ENCODE measurements at regions of chr3 and their contacts with region 1.

Region 1: DNA sequence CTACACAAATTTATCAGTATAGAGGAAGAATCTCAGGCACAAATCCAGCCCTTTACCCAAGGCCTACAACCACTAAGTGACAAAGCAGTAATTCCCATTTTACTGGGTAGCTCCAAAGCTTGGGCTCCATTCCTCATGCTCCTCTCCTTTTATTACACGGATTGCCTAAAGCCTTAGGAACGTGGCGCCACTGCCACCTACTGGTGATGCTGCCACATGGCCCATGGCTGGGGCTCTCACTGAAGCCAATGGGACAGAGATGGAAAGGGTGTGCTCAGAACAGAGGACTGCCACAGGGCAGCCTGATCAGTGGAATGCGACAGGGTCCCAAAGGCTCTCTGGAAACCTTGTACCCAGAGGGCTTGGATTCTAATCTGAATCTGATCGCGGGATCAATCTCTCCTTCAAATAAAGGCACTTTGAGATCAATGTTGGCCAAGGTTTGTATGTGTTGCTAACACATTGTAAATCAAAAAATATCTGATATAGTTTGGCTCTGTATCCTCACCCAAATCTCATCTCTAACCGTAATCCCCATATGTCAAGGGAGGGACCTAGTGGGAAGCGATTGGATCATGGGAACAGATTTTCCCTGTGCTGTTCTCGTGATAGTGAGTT is 33.5 kb upstream of the LYZL4 start:
- DNase-seq: peak; percentile 91

Region 2: DNA sequence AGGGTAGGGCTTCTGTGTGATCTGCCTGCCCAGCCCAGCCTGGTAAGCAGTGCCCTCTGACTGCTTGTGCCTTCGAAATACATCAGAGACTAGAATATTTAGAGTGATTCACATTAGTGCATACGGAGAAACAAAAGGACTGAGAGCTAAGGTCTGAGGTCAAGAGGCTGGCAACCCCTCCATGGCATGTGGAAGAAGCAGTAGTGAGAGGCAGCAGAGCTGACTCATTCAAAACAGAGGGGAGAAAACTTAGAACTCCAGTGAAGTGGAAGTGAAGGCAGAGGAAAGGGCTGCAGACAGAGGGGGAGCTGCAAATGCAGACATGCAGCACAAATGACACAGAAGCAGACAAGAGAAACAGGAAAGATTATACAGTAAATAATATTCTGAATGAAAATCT is 543.7 kb before region 1 on chr3:
- intact Hi-C with region 1: loop called (anchors 5 kb)
- DNase-seq: no peak

Region 3: DNA sequence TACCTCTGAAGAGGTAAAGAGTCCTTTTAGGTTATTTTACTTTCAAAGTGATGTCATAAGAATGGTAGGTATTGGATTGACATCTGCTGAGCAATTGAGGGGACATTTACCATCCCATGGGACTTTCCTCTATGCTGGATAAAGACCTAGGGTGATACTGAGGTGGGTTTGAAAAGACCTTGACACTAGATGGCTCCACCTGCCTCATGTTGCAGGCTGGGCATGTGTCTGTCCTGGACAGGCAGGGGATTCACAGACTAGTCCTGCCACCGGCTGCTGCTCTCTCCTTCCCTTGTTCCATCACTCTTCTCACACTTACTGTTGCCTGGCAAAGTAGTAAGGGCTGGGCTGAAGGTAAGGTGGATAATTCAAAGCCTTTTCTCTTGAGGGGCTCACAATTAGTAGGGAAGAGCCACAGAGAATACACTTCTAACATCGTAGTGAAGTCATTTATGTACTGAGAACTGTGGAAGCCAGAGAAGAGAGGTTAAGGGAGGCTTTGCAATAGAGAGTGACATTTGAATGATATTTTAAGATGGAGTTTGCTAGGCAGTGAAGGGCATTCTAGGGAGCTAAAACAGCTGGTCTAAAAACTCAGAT is 325.1 kb before region 1 on chr3:
- intact Hi-C with region 1: loop called (anchors 10 kb)
- DNase-seq: no peak

Region 4: DNA sequence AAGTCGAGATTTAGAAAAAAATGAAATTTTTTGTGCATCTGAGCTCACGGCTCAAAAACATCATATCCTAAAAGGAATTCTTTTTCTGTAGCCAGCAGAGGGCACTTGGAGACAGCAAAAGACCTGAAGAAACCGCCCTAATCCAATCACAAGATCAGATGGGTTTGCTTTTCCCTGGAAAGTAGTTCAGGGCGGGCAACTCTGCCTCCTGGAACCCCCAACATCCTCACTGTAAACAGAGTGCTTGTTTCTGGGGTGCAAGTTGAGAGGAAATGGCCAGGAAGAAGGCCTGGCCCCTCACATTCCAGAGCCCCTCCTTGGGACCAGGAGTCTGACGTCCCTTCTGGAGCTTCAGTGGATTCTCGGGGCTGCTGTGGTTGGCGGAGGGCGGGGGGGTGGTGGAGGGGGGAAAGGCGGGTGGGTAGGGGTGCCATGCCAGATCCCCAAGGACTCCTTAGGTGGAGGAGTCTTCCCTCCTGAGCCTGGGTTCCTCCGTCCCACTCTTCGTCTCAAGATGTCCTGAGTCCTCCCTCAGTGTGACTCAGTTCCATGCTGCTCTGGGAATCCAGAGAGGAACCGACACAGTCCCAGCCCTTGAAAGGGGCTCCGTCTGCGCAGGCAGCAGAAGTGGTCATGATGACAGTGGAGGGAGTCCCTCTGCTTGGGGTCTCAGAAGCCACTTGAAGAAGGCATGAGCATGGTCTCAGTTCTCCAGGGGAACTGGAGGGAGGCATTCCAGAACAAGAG is 213.8 kb before region 1 on chr3:
- intact Hi-C with region 1: loop called (anchors 2 kb)
- DNase-seq: no peak

Region 5: DNA sequence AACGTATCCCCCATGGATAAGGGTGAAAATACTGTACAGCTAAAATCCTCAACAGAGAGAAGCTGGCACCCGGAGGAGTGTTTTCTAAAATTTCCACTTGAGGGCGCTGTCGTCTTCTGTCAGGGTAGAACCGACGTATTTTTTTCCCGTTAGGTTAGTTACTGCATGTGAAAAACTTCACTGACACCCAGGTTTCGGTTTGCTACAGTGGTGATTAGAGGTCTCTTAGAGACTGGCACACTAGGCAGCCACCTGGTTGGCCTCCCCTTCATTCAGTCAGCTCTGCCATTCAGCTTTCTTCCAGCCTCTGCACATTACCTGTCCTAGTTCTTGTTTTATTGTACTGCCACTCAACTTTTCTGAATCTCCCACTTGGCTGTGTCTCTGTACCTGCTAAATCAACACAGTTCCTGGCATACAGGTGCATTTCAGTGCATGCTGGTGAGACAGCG is 196.3 kb before region 1 on chr3:
- intact Hi-C with region 1: loop called (anchors 5 kb)
- DNase-seq: no peak

Region 6: GRCh38 chr3:42387802-42388651 is 55.9 kb before region 1 on chr3:
- intact Hi-C with region 1: no loop called
- DNase-seq: no peak